ENCODE measurements at regions of chr11 and their contacts with region 1.

Region 1: DNA sequence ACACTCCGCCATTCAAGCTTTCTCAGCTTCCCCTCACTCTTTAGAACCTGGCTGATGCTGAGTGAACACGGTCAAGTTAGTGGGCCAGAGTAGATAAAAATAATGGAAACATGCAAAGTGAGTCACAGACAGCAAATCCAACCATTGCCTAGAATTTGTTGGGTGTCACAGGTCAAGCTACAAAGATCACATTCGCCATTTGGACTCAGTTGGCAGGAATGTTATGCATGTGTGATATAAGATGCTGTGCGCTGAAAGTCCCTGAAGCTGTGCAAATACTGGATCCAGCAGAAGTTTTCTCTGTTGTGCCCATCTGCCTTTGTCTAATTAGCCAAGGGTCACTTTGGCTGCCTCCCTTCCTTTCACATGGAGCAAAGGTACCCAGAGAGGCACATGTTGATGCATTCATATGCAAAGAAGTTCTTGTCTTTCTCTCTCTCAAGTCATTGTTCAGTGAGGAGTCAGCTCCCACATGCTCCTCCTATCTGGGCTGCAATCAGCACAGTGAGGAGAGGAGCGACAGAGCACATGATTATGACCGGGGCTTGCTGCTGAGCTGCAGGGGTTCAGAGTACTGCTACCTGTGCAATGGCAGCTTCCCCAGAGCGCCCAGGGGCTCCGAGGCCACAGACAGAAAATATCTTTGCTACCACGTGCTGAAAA is 39.7 kb downstream of the FLI1 start:
- DNase-seq: peak; percentile 58
- H3K4me3 Mint-ChIP-seq: peak overlapping the region; percentile 65
- H3K27ac Mint-ChIP-seq: peak overlapping the region; percentile 32
- H3K4me1 Mint-ChIP-seq: peaks cover 93% of the 10 kb centered on the region
- H3K27me3 Mint-ChIP-seq: no peaks in the 10 kb centered on the region

Region 2: DNA sequence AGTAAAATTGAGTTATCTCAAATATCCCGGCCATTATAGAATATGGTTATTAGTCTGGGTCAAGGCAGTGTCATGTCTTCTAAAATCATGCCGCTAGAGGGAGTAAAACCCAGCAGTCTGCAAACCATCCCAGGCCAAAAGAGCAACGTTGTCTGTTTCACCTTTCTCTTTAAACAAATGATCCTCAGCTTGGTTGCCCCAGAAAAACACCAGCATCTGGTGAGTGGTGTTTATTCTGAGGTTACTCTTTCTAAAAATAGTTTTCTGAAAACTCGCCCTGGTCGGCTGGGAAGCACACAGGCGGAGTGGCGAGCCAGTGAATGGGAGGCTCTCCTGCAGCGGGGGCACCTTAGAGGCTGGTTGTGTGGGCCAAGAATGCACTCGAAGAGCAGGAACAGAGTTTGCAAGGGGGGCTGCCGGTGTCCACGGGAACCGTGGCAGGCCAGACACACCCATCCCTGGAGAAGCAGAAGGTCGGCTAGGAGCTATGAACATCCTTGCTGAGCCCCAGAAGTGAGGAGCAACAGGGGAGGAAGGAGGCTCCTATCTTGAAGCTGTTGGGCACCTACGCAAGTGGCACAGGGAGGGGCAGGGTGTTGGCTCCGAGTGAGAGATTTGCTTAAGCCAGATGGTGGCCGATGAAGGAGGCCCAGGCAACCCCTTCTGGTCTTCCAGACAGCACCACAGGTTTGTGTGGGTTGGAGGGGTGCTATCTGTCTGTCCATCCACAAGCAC is 443.3 kb before region 1 on chr11:
- CTCF ChIA-PET with region 1: no interaction called
- intact Hi-C with region 1: no loop called
- DNase-seq: peak; percentile 83
- H3K4me3 Mint-ChIP-seq: peak overlapping the region; percentile 87
- H3K27ac Mint-ChIP-seq: peak overlapping the region; percentile 96
- H3K4me1 Mint-ChIP-seq: peaks cover 98% of the 10 kb centered on the region
- H3K27me3 Mint-ChIP-seq: no peaks in the 10 kb centered on the region

Region 3: DNA sequence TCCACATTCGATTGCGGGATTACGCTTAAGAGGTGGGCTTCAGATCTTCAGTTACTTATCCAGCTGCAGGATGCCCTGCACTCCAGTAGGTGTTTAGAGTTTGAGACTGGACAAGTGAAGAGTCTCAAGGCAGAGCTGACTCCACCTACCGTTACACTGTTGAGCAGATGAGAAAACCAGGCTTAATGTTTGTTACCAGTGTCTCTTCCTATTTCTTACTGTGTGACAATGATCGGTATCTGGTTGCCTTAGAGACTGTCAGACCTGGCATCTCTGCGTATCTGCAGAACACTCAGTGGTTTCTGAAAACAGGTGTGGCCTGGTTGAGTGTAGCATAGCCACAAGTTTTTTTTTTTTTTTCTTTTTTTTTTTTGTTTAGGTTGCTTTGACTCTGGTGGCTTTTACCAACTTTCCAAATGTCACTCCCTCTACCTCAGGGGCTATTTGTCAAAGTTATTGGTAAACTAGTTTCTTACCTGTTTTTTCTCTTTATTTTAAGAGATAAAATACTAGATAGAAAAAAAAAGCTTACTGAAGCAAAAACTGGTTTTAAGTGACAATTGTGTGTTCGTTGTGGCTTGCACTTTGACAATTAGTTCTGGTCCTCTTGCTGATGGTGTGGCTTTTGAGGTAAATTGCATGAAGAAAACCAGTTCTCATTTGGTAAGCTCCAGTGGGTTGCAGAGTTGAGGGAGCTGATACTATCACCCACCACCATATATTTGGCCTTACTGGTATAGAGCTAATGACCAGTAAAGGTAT is 431.0 kb before region 1 on chr11:
- CTCF ChIA-PET with region 1: no interaction called
- intact Hi-C with region 1: loop called (anchors 5 kb)
- DNase-seq: peak; percentile 79
- H3K4me3 Mint-ChIP-seq: peak overlapping the region; percentile 74
- H3K27ac Mint-ChIP-seq: peak overlapping the region; percentile 93
- H3K4me1 Mint-ChIP-seq: peaks cover 80% of the 10 kb centered on the region
- H3K27me3 Mint-ChIP-seq: no peaks in the 10 kb centered on the region

Region 4: DNA sequence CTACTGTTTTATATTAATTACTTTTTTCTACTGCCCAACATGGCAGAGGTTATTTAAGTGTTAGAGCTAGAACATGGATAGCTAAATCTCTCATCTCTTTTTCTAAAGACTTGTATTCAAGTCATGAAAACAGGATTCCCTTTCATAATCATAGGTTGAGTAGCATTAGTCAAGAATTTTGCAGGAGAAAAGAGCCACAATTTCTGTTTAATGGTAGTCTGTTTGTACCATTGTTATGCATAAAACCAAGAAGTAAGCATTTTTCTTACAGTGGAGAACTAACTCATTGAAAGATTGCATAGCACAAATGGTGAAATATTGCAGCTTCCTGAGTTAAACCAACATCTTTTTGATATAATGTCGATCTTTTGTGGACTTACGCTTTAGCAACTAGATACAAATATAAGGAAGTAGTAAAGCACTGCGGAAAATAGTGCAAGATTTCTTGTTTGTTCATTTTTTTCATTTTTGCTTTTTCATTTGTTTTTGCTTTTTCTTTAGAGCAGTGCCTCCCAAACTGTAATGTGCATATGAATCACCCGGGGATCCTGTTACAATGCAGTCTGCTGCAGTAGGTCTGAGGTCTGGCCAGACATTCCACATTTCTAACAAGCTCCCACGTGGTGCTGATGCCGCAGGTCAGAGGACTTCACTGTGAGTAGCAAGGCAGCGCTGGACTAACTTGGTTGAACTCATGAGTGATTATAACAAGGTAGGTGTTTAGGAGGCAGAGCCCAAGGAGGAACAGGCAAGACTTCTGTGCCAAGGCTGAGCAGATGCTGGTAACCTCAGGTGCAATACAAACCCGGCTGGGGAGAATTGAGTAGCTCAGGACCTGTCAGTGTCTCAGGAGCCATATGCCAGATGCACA is 150.8 kb before region 1 on chr11:
- CTCF ChIA-PET with region 1: no interaction called
- intact Hi-C with region 1: loop called (anchors 2 kb)
- DNase-seq: peak; percentile 50
- H3K4me3 Mint-ChIP-seq: peak overlapping the region; percentile 69
- H3K27ac Mint-ChIP-seq: peak overlapping the region; percentile 78
- H3K4me1 Mint-ChIP-seq: peaks cover 62% of the 10 kb centered on the region
- H3K27me3 Mint-ChIP-seq: no peaks in the 10 kb centered on the region

Region 5: GRCh38 chr11:128660947-128661346 is 72.6 kb before region 1 on chr11:
- CTCF ChIA-PET with region 1: no interaction called
- intact Hi-C with region 1: no loop called
- DNase-seq: no peak
- H3K4me3 Mint-ChIP-seq: no peak overlapping the region
- H3K27ac Mint-ChIP-seq: no peak overlapping the region
- H3K4me1 Mint-ChIP-seq: no peaks in the 10 kb centered on the region
- H3K27me3 Mint-ChIP-seq: peaks cover 2% of the 10 kb centered on the region

Region 6: GRCh38 chr11:128678024-128678423 is 55.5 kb before region 1 on chr11:
- CTCF ChIA-PET with region 1: no interaction called
- intact Hi-C with region 1: no loop called
- DNase-seq: no peak
- H3K4me3 Mint-ChIP-seq: no peak overlapping the region
- H3K27ac Mint-ChIP-seq: no peak overlapping the region
- H3K4me1 Mint-ChIP-seq: peaks cover 14% of the 10 kb centered on the region
- H3K27me3 Mint-ChIP-seq: no peaks in the 10 kb centered on the region

Region 7: GRCh38 chr11:128695539-128696221 is 37.9 kb before region 1 on chr11:
- CTCF ChIA-PET with region 1: interaction called, 3 read pairs
- intact Hi-C with region 1: loop called (anchors 1 kb)
- DNase-seq: peak; percentile 58
- H3K4me3 Mint-ChIP-seq: peak overlapping the region; percentile 90
- H3K27ac Mint-ChIP-seq: peak overlapping the region; percentile 94
- H3K4me1 Mint-ChIP-seq: peaks cover 54% of the 10 kb centered on the region
- H3K27me3 Mint-ChIP-seq: peaks cover 7% of the 10 kb centered on the region

Region 8: GRCh38 chr11:128720522-128720985 is 13.0 kb before region 1 on chr11:
- CTCF ChIA-PET with region 1: interaction called, 5 read pairs
- intact Hi-C with region 1: loop called (anchors 1 kb)
- DNase-seq: peak; percentile 72
- H3K4me3 Mint-ChIP-seq: peak overlapping the region; percentile 73
- H3K27ac Mint-ChIP-seq: peak overlapping the region; percentile 87
- H3K4me1 Mint-ChIP-seq: peaks cover 97% of the 10 kb centered on the region
- H3K27me3 Mint-ChIP-seq: no peaks in the 10 kb centered on the region

Region 9: DNA sequence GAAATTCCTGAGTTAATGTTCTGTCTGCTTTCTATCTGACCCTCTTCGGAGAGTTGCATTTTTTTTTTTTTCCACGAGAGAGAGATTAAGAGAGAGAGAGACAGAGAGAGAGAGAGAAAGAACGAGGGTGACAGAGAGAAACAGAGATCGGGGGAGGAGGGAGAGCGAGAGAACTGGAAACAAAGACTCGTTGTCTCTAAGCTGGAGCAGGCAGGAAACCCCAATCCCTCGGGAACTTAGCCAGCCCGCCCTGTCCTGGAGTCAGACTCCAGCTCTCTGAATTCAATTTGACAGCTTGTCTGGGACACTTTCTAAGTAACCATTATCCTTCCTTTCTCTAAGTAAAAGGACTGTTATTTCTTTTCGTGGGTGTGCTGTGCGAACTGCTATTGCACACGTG is 56.6 kb after region 1 on chr11:
- CTCF ChIA-PET with region 1: no interaction called
- intact Hi-C with region 1: no loop called
- DNase-seq: no peak
- H3K4me3 Mint-ChIP-seq: no peak overlapping the region
- H3K27ac Mint-ChIP-seq: no peak overlapping the region
- H3K4me1 Mint-ChIP-seq: no peaks in the 10 kb centered on the region
- H3K27me3 Mint-ChIP-seq: no peaks in the 10 kb centered on the region